ENCODE measurements at regions of chr5 and their contacts with region 1.

Region 1: GRCh38 chr5:154683101-154683880 is 71.9 kb upstream of the LARP1 start:
- DNase-seq: no peak
- H3K4me3 ChIP-seq: peak overlapping the region; percentile 58
- H3K27me3 ChIP-seq: no peaks in the 10 kb centered on the region
- CTCF ChIP-seq: no peak

Region 2: DNA sequence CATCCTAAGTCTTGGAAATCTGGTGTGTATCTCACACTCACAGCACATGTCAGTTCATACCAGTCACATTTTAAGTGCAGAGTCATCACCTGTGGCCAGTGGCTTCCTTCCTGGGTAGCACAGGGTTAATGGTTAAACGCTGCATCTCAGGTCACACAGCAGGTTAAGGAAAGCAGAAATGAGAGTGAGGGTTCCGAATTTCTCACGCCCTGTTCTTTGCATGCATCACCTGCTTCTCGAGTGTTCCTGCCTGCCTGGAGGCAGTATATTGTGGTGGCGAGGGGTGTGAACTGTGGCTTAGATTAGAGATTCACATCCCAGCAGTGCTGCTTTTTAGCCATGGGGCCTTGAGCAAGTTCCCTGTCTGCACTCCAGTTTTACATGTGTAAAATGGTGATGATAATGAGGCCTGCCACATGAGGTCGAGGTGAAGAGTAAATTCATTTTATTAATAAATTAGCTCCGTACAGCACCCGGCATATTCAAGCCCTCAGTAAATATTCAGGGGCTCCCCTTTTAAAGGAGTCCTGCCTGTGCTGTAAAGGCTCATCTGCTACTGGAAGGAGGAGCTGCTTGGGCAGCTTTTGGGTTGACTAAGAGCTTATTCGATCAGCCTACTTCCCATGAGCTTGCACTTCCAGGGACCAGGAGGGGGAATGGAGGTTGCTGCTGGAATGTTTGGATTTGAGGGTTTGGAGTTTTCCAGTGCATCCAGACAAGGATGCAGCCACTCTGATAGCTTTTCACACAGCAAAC is 298.6 kb before region 1 on chr5:
- CTCF ChIA-PET with region 1: no interaction called
- POLR2A ChIA-PET with region 1: no interaction called
- DNase-seq: no peak
- H3K4me3 ChIP-seq: no peak overlapping the region
- H3K27me3 ChIP-seq: no peaks in the 10 kb centered on the region
- CTCF ChIP-seq: no peak

Region 3: GRCh38 chr5:154610321-154611154 is 72.8 kb before region 1 on chr5:
- CTCF ChIA-PET with region 1: no interaction called
- POLR2A ChIA-PET with region 1: no interaction called
- DNase-seq: no peak
- H3K4me3 ChIP-seq: peak overlapping the region; percentile 27
- H3K27me3 ChIP-seq: peaks cover 15% of the 10 kb centered on the region
- CTCF ChIP-seq: peak; percentile 94

Region 4: DNA sequence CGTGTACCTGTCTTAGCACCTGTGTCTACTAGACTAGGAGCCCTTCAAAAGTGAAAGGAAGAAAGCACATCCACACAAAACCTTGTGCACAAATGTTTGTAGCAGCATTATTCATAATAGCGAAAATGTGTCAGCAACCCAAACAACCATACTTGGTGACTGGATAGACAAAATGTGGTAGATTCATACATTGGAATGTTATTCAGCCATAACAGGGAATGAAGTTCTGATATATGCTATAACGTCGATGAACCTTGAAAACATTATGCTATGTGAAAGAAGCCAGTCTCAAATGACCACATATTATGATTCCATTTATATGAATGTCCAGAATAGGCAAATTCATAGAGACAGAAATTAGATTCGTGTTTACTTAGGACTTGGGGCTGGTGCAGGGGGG is 14.1 kb after region 1 on chr5:
- CTCF ChIA-PET with region 1: interaction called, 3 read pairs
- POLR2A ChIA-PET with region 1: interaction called, 11 read pairs
- DNase-seq: no peak
- H3K4me3 ChIP-seq: no peak overlapping the region
- H3K27me3 ChIP-seq: no peaks in the 10 kb centered on the region; the same call in 1 of the 2 replicates
- CTCF ChIP-seq: no peak

Region 5: GRCh38 chr5:154786414-154786813 is 103.1 kb after region 1 on chr5:
- CTCF ChIA-PET with region 1: no interaction called
- POLR2A ChIA-PET with region 1: no interaction called
- DNase-seq: no peak
- H3K4me3 ChIP-seq: no peak overlapping the region
- H3K27me3 ChIP-seq: no peaks in the 10 kb centered on the region
- CTCF ChIP-seq: no peak

Region 6: GRCh38 chr5:154967421-154968024 is 284.2 kb after region 1 on chr5:
- CTCF ChIA-PET with region 1: no interaction called
- POLR2A ChIA-PET with region 1: no interaction called
- DNase-seq: no peak
- H3K4me3 ChIP-seq: no peak overlapping the region
- H3K27me3 ChIP-seq: no peaks in the 10 kb centered on the region
- CTCF ChIP-seq: peak; percentile 62